K562 (cell line): ENCODE measurements at regions of chr18 and their contacts with region 1.

Region 1: DNA sequence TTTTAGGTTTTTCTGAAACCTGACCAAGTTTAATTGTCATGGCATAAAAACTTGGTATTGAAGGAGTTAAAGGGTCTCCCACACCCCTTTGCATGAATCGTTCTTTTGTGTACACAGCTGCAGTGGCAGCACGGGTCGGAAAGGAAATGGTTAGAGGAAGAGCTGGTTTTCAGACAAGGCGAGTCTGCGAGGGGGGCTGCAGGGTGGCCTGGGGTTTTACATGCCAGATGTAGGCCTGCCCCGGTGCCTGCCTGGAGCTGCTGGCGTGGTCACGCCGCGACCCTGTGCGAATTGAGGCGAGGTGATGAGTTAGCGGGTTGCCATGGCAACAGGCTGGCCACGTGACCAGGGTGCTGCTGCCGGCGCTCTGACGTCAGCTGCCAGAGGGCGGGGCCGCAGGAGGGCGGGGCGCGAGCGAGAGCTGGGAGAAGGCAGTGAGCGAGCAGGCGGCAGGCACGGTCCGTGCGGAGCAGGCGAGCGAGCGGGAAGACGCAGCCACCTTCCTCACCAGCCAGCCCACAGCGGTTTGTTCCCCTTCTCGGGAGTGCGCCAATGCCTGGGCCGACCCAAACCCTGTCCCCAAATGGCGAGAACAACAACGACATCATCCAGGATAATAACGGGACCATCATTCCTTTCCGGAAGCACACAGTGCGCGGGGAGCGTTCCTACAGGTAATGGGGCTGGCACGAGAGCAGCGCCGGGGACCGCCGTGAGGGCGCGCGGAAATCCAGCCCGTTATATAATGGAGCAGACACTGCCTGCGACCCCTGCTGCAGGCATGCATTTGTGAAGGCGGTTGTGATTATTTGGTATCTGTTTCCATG is at the start of gene MAPRE2:
- DNase-seq: peak; percentile 99 to 100 (median 99)
- ATAC-seq: peak; percentile 91
- H3K4me3 ChIP-seq: peak within 1 kb of the TSS; percentile 55
- H3K27ac ChIP-seq: peak within 1 kb of the TSS; percentile 74
- H3K4me1 ChIP-seq: peaks cover 14 to 46% of the 10 kb centered on the region in 2 experiments
- H3K27me3 ChIP-seq: no peaks in the 10 kb centered on the region
- CTCF ChIP-seq: peak in 1 of 3 experiments; percentile 4; a peak in 1 of 6 replicates
- EP300 ChIP-seq: no peak; the same call in 1 of the 2 replicates
- POLR2A ChIP-seq: peak; percentile 93
- RAD21 ChIP-seq: peak in 1 of 2 experiments; percentile 23; a peak in 2 of 4 replicates
- polyA plus RNA-seq, gene MAPRE2: 33.6 to 40.7 TPM

Region 2: GRCh38 chr18:34985963-34986362 is 55.2 kb before region 1 on chr18:
- CTCF ChIA-PET with region 1: no interaction called
- POLR2A ChIA-PET with region 1: no interaction called
- in situ Hi-C with region 1: no loop called
- intact Hi-C with region 1: loop called (anchors 10 kb)
- DNase-seq: no peak
- ATAC-seq: no peak
- H3K4me3 ChIP-seq: no peak overlapping the region
- H3K27ac ChIP-seq: no peak overlapping the region
- H3K4me1 ChIP-seq: no peaks in the 10 kb centered on the region
- H3K27me3 ChIP-seq: peaks cover 0 to 5% of the 10 kb centered on the region in 2 experiments; a peak in 1 of 5 replicates
- CTCF ChIP-seq: no peak
- EP300 ChIP-seq: no peak
- POLR2A ChIP-seq: no peak
- RAD21 ChIP-seq: no peak

Region 3: GRCh38 chr18:35029770-35030169 is 11.4 kb before region 1 on chr18:
- CTCF ChIA-PET with region 1: no interaction called
- POLR2A ChIA-PET with region 1: interaction called, 21 read pairs
- in situ Hi-C with region 1: no loop called
- intact Hi-C with region 1: no loop called
- DNase-seq: no peak
- ATAC-seq: no peak; the same call in 2 of the 3 replicates
- H3K4me3 ChIP-seq: no peak overlapping the region
- H3K27ac ChIP-seq: no peak overlapping the region
- H3K4me1 ChIP-seq: peaks cover 0 to 11% of the 10 kb centered on the region in 2 experiments; a peak in 2 of 5 replicates
- H3K27me3 ChIP-seq: no peaks in the 10 kb centered on the region
- CTCF ChIP-seq: no peak
- EP300 ChIP-seq: no peak
- POLR2A ChIP-seq: no peak
- RAD21 ChIP-seq: no peak

Region 4: DNA sequence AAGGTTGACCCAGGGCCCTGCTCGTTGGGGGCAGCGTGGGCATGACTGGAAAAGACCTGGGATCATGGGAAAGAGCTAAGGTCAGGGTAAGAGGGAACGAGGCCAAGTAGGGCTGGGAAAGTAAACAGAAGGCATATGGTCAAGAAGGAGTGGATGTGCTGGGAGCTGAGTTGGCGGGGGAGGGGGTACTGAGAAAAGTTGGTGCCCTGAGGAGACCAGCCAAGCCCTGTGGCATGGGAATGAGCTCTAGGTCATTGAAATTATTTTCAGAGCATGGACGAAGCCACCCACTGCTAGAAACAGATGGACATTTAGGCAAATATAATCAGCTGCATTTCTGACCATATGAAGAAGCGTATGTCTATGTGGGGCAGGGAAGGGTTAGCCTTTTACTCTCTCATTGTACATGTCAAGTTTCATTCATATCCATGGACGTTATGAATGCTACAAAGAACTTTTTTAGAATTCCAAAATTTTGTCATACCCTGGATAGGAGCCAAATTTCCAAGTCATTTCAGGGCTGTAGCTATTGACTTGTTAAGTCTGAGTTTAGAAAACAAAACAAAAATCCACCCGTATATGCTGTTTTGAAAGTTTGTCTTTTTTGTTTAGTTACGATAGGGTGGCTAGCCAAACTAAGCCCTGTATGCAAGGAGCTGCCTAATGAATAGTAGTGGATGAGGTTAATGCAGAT is 19.1 kb after region 1 on chr18:
- CTCF ChIA-PET with region 1: no interaction called
- POLR2A ChIA-PET with region 1: interaction called, 33 read pairs
- in situ Hi-C with region 1: no loop called
- intact Hi-C with region 1: no loop called
- DNase-seq: no peak
- ATAC-seq: 0 out of 3 replicates have a peak, but pooled peaks have one; percentile 6
- H3K4me3 ChIP-seq: no peak overlapping the region
- H3K27ac ChIP-seq: no peak overlapping the region
- H3K4me1 ChIP-seq: peaks cover 0 to 14% of the 10 kb centered on the region in 2 experiments; a peak in 4 of 5 replicates
- H3K27me3 ChIP-seq: no peaks in the 10 kb centered on the region
- CTCF ChIP-seq: no peak
- EP300 ChIP-seq: no peak
- POLR2A ChIP-seq: no peak
- RAD21 ChIP-seq: no peak

Region 5: GRCh38 chr18:35110554-35111485 is 69.6 kb after region 1 on chr18:
- CTCF ChIA-PET with region 1: no interaction called
- POLR2A ChIA-PET with region 1: no interaction called
- in situ Hi-C with region 1: no loop called
- intact Hi-C with region 1: loop called (anchors 5 kb)
- DNase-seq: peak; percentile 77 to 90 (median 82)
- ATAC-seq: peak; percentile 93
- H3K4me3 ChIP-seq: no peak overlapping the region
- H3K27ac ChIP-seq: peak overlapping the region; percentile 79
- H3K4me1 ChIP-seq: peaks cover 7 to 39% of the 10 kb centered on the region in 2 experiments; a peak in 4 of 5 replicates
- H3K27me3 ChIP-seq: no peaks in the 10 kb centered on the region
- CTCF ChIP-seq: no peak
- EP300 ChIP-seq: peak; percentile 99
- POLR2A ChIP-seq: no peak
- RAD21 ChIP-seq: peak in 1 of 2 experiments; percentile 15; a peak in 1 of 4 replicates

Region 6: DNA sequence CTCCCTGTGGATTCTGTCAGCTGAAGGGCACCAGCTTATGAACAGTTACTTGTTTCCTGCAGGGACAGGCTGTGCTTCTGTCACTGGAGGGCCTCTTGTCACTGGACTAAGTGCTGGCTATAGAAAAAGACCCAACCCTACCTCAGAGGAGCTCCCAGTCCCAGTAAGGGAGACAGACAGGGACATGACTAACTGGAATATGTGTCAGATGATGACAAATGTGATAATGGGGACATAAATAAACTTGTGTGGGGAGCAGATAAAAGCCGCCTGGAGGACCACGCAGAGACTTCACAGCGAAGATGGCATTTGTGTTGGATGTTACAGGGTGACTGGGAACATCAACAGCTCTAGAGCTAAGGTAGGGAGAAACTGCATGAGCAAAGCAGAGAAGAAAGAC is 95.0 kb after region 1 on chr18:
- CTCF ChIA-PET with region 1: no interaction called
- POLR2A ChIA-PET with region 1: interaction called, 8 read pairs
- in situ Hi-C with region 1: no loop called
- intact Hi-C with region 1: loop called (anchors 5 kb)
- DNase-seq: peak; percentile 29 to 89 (median 58)
- ATAC-seq: peak; percentile 76
- H3K4me3 ChIP-seq: no peak overlapping the region
- H3K27ac ChIP-seq: peak overlapping the region; percentile 3; the same call in 2 of the 3 replicates
- H3K4me1 ChIP-seq: peaks cover 32 to 51% of the 10 kb centered on the region in 2 experiments
- H3K27me3 ChIP-seq: no peaks in the 10 kb centered on the region
- CTCF ChIP-seq: no peak
- EP300 ChIP-seq: peak; percentile 88
- POLR2A ChIP-seq: no peak
- RAD21 ChIP-seq: peak; percentile 41 to 53

Region 7: GRCh38 chr18:35343936-35344735 is 302.9 kb after region 1 on chr18 and contains the start of gene ZNF24:
- CTCF ChIA-PET with region 1: no interaction called
- POLR2A ChIA-PET with region 1: interaction called, 3 read pairs
- in situ Hi-C with region 1: no loop called
- intact Hi-C with region 1: loop called (anchors 10 kb)
- DNase-seq: peak; percentile 98
- ATAC-seq: peak; percentile 97
- H3K4me3 ChIP-seq: peak within 1 kb of the TSS; percentile 91
- H3K27ac ChIP-seq: peak within 1 kb of the TSS; percentile 99
- H3K4me1 ChIP-seq: peaks cover 8 to 10% of the 10 kb centered on the region in 2 experiments; a peak in 4 of 5 replicates
- H3K27me3 ChIP-seq: no peaks in the 10 kb centered on the region
- CTCF ChIP-seq: no peak
- EP300 ChIP-seq: peak; percentile 4; the same call in 1 of the 2 replicates
- POLR2A ChIP-seq: peak; percentile 98
- RAD21 ChIP-seq: no peak; a peak in 1 of 4 replicates
- polyA plus RNA-seq, gene ZNF24: 51.6 to 72.2 TPM